ENCODE measurements at regions of chrX and their contacts with region 1.

Region 1: DNA sequence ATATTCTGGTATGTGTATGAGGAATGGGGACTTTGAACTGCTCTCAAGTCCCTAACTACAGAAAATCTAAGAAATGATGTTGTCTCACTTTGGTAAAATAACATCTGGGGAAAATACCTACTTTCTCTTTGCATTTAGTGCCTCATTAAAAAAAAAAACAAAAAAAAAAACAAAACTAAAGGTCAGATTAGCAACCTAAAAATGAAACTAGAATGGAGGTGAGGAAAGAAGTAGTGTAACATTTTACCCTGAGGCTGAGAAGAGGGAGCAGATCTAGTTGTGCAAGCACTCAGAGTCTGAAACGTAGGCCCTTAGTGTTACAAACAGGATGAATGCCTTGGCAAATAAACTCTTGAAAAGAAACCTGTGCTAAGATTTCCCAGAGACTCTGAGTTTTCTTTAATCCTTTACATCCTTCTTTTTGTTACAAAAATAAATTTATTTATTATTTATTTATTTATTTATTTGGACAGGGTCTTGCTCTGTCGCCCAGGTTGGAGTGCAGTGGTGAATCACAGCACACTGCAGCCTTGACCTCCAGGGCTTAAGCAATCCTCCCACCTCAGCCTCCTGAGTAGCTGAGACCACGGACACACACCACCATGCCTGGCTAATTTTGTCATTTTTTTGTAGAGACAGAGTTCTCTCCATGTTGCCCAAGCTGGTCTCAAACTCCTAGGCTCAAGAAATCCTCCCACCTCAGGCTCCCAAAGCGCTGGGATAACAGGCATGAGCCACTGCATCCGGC is 56.2 kb downstream of the VGLL1 start:
- DNase-seq: peak in 3 of 9 donors; percentile 16 to 41 (median 33)
- ATAC-seq: peak; percentile 51
- H3K4me3 ChIP-seq: no peak overlapping the region
- H3K4me3 Mint-ChIP-seq: peak overlapping the region in 9 of 10 donors; percentile 26 to 80 (median 70)
- H3K27ac ChIP-seq: peak overlapping the region; percentile 63
- H3K27ac Mint-ChIP-seq: peak overlapping the region; percentile 88 to 98 (median 95)
- H3K4me1 ChIP-seq: peaks cover 43 to 44% of the 10 kb centered on the region in 2 donors
- H3K4me1 Mint-ChIP-seq: peaks cover 12 to 52% (median 50%) of the 10 kb centered on the region in 7 donors
- H3K27me3 ChIP-seq: no peaks in the 10 kb centered on the region
- H3K27me3 Mint-ChIP-seq: no peaks in the 10 kb centered on the region

Region 2: GRCh38 chrX:136251041-136251991 is 336.9 kb before region 1 on chrX and contains the start of gene MAP7D3:
- CTCF ChIA-PET with region 1: no interaction called
- POLR2A ChIA-PET with region 1: no interaction called
- intact Hi-C with region 1: loop called in 1 of 2 experiments (anchors 5 kb)
- DNase-seq: peak; percentile 54 to 74 (median 66)
- ATAC-seq: peak; percentile 96
- H3K4me3 ChIP-seq: peak within 1 kb of the TSS; percentile 58
- H3K4me3 Mint-ChIP-seq: peak within 1 kb of the TSS; percentile 84 to 98 (median 91)
- H3K27ac ChIP-seq: peak within 1 kb of the TSS; percentile 67
- H3K27ac Mint-ChIP-seq: peak within 1 kb of the TSS; percentile 82 to 97 (median 89)
- H3K4me1 ChIP-seq: no peaks in the 10 kb centered on the region
- H3K4me1 Mint-ChIP-seq: peaks cover 0 to 15% (median 8%) of the 10 kb centered on the region in 7 donors
- H3K27me3 ChIP-seq: no peaks in the 10 kb centered on the region
- H3K27me3 Mint-ChIP-seq: no peaks in the 10 kb centered on the region
- total RNA-seq, gene MAP7D3: 5.9 to 15.8 (median 7.7) TPM

Region 3: GRCh38 chrX:136572030-136572429 is 16.2 kb before region 1 on chrX:
- CTCF ChIA-PET with region 1: interaction called, 9 read pairs
- POLR2A ChIA-PET with region 1: interaction called, 10 read pairs
- intact Hi-C with region 1: loop called in 1 of 2 experiments (anchors 1 kb)
- DNase-seq: peak in 3 of 9 donors; percentile 1 to 29 (median 6)
- ATAC-seq: no peak
- H3K4me3 ChIP-seq: no peak overlapping the region
- H3K4me3 Mint-ChIP-seq: peak overlapping the region in 3 of 10 donors; percentile 12 to 25 (median 24)
- H3K27ac ChIP-seq: no peak overlapping the region
- H3K27ac Mint-ChIP-seq: peak overlapping the region in 2 of 9 donors; percentile 25 to 59
- H3K4me1 ChIP-seq: peaks cover 4 to 8% of the 10 kb centered on the region in 2 donors
- H3K4me1 Mint-ChIP-seq: peaks cover 0 to 11% (median 9%) of the 10 kb centered on the region in 7 donors
- H3K27me3 ChIP-seq: no peaks in the 10 kb centered on the region
- H3K27me3 Mint-ChIP-seq: no peaks in the 10 kb centered on the region

Region 4: DNA sequence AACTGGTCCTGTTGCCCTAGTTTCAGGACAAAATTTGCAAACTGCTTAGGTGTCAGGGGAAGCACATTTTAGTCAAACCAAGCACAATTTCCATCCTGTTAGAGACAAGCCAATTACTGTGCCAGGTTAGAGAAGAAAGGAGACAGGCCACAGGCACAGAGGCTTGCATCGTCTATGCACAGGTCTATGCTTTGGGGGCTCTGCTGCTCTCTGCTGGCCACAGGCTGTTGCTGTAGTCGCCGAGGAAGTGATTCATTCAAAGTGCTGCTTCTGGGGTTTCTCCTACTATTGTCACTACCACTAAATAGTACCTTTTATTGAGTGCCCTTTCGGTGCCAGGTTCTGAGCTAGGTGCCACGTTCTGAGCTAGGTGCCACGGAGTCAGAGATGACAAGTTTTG is 10.7 kb before region 1 on chrX:
- CTCF ChIA-PET with region 1: interaction called, 9 read pairs
- POLR2A ChIA-PET with region 1: interaction called, 10 read pairs
- intact Hi-C with region 1: loop called in 1 of 2 experiments (anchors 1 kb)
- DNase-seq: peak; percentile 30 to 74 (median 62)
- ATAC-seq: peak; percentile 99
- H3K4me3 ChIP-seq: no peak overlapping the region
- H3K4me3 Mint-ChIP-seq: peak overlapping the region in 2 of 10 donors; percentile 20 to 63
- H3K27ac ChIP-seq: no peak overlapping the region
- H3K27ac Mint-ChIP-seq: peak overlapping the region in 8 of 9 donors; percentile 10 to 83 (median 67)
- H3K4me1 ChIP-seq: peaks cover 3 to 4% of the 10 kb centered on the region in 2 donors
- H3K4me1 Mint-ChIP-seq: peaks cover 0 to 22% (median 11%) of the 10 kb centered on the region in 7 donors
- H3K27me3 ChIP-seq: no peaks in the 10 kb centered on the region
- H3K27me3 Mint-ChIP-seq: no peaks in the 10 kb centered on the region

Region 5: DNA sequence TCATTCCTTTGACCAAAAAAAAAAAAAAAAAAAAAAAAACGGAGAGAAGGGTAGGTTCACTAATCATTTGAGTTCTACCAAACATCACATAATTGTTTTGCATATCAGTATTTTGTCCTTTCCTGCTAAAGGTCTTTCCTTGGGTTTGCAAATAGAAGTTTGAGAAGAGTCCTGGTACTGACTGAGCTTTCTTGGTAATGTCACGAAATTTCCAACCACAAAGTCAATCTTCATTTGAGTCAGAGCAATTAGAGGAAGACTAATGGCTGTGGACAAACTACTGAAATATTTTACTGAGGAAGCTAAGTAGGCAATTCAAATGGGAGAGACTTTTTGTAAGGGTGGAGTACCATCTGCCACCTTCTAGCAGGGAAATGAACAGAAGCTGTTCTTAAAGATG is 38.0 kb after region 1 on chrX:
- CTCF ChIA-PET with region 1: no interaction called
- POLR2A ChIA-PET with region 1: interaction called, 4 read pairs
- intact Hi-C with region 1: loop called in 1 of 2 experiments (anchors 5 kb)
- DNase-seq: no peak
- ATAC-seq: no peak
- H3K4me3 ChIP-seq: peak overlapping the region; percentile 18
- H3K4me3 Mint-ChIP-seq: peak overlapping the region in 8 of 10 donors; percentile 17 to 75 (median 58)
- H3K27ac ChIP-seq: peak overlapping the region; percentile 12
- H3K27ac Mint-ChIP-seq: peak overlapping the region; percentile 40 to 93 (median 85)
- H3K4me1 ChIP-seq: peaks cover 56 to 72% of the 10 kb centered on the region in 2 donors
- H3K4me1 Mint-ChIP-seq: peaks cover 30 to 97% (median 87%) of the 10 kb centered on the region in 7 donors
- H3K27me3 ChIP-seq: no peaks in the 10 kb centered on the region
- H3K27me3 Mint-ChIP-seq: no peaks in the 10 kb centered on the region

Region 6: GRCh38 chrX:136646602-136647239 is 58.5 kb after region 1 on chrX:
- CTCF ChIA-PET with region 1: no interaction called
- POLR2A ChIA-PET with region 1: no interaction called
- intact Hi-C with region 1: loop called in 1 of 2 experiments (anchors 5 kb)
- DNase-seq: peak in 7 of 9 donors; percentile 49 to 76 (median 67)
- ATAC-seq: peak; percentile 88
- H3K4me3 ChIP-seq: no peak overlapping the region
- H3K4me3 Mint-ChIP-seq: peak overlapping the region; percentile 69 to 99 (median 96)
- H3K27ac ChIP-seq: peak overlapping the region; percentile 79
- H3K27ac Mint-ChIP-seq: peak overlapping the region; percentile 92 to 99 (median 95)
- H3K4me1 ChIP-seq: peaks cover 14 to 40% of the 10 kb centered on the region in 2 donors
- H3K4me1 Mint-ChIP-seq: peaks cover 23 to 53% (median 47%) of the 10 kb centered on the region in 7 donors
- H3K27me3 ChIP-seq: no peaks in the 10 kb centered on the region
- H3K27me3 Mint-ChIP-seq: no peaks in the 10 kb centered on the region

Region 7: DNA sequence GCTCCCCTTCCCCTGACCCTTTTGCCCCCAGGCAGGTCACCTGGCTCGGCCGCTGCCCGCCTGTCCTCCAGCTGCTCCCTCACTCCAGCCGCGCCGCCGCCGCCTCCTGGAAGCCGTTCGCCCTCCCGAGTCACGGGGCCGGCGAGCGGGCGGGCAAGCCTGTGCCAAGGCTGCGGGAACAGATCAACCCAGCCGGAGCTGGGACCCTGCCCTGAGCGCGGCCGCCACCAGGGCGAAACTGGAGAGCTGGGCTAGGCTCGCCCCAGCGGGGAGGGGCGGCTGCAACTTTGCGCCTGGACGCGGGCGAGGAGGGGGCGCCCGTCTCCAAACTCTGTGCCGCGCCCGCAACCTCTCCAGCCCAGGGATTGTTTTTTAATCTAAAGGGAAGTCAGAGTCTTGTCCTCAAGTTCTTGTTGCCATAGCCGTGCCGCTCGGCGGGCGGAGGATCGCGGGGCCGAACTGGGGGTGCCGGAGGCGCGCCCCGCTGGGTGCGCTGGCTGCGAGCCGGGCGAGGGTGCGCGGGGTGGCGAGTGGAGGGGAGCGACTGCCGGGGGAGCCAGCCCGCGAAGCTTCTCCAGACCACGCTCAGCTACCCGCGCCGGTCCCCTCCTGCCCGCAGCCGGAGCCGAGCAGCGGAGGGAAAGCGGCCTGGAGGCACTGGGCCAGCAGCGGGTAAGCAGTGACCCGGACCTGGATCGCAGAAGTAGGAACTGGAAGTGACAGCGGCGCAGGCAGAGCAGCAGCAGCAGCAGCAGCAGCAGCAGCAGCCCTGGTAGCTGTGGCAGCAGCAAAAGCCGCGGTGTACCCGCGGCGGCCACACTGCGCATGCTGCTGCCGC is 179.1 kb after region 1 on chrX:
- CTCF ChIA-PET with region 1: no interaction called
- POLR2A ChIA-PET with region 1: no interaction called
- intact Hi-C with region 1: loop called in 1 of 2 experiments (anchors 5 kb)
- DNase-seq: peak; percentile 20 to 48 (median 41)
- ATAC-seq: peak; percentile 81
- H3K4me3 ChIP-seq: peak overlapping the region; percentile 61
- H3K4me3 Mint-ChIP-seq: peak overlapping the region; percentile 80 to 90 (median 82)
- H3K27ac ChIP-seq: peak overlapping the region; percentile 66
- H3K27ac Mint-ChIP-seq: peak overlapping the region; percentile 66 to 94 (median 87)
- H3K4me1 ChIP-seq: peaks cover 17 to 46% of the 10 kb centered on the region in 2 donors
- H3K4me1 Mint-ChIP-seq: peaks cover 27 to 81% (median 68%) of the 10 kb centered on the region in 7 donors
- H3K27me3 ChIP-seq: no peaks in the 10 kb centered on the region
- H3K27me3 Mint-ChIP-seq: no peaks in the 10 kb centered on the region

Measured in naive thymus-derived CD4-positive, alpha-beta T cell (primary cell).